CD8-positive, alpha-beta T cell (primary cell): ENCODE measurements at regions of chr10 and their contacts with region 1.

Region 1: DNA sequence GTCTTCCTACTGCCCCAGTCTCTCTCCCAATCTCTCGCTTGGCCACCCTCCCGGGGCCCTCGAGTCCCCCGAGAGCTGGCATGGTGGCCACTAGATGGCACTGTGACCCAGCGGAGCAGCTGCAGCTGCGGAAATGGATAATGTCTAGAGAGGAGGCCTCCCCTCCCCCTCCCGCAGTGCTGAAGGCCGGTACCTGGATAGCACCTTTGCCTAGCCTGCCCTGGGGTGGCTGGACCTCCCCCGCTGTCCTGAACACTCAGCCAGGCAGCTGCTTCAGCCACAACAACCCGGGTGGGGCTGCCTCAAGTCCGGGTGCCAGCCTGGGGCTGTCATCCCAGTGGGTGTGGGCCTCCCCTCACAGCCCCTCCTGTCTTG is 65.2 kb downstream of the GOLGA7B start:
- DNase-seq: peak; percentile 44 to 81 (median 72)
- ATAC-seq: peak; percentile 85
- H3K4me3 ChIP-seq: no peak overlapping the region
- H3K4me3 Mint-ChIP-seq: no peak overlapping the region
- H3K27ac ChIP-seq: no peak overlapping the region
- H3K27ac Mint-ChIP-seq: no peak overlapping the region
- H3K4me1 ChIP-seq: no peaks in the 10 kb centered on the region
- H3K4me1 Mint-ChIP-seq: peaks cover 5% of the 10 kb centered on the region
- H3K27me3 ChIP-seq: peaks cover 0 to 3% of the 10 kb centered on the region in 2 experiments
- H3K27me3 Mint-ChIP-seq: peaks cover 13% of the 10 kb centered on the region
- CTCF ChIP-seq: peak; percentile 91

Region 2: DNA sequence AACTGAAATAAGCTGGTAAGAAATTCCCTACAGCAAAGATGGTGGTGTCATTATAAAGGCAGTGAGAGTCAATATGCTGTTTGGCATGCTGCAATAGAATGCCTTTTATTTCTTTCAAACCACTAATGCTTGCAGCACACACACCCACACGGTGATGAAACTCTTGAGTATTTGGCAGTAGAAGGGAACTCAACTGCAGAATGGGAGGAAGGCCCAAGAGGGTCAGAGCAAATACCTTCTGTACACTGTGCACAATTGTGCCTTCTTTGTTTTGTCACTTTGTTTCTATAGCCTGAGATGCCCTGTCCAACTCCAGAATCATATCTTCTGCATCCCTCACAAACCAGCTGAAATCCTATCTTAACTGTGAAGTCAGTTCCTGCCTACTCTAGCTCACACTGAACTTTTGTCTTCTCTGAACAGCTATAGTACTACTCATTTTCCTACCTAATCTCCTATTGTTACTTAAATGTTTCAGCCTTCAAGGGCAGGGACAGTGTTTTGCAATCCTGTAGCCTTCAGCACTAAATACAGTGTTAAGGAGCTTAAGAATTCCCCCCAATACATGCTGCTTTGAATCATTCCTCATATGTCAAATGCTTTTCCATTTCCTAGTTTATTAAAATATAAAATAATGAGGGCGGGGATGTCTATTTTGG is 438.8 kb before region 1 on chr10:
- CTCF ChIA-PET with region 1: no interaction called
- POLR2A ChIA-PET with region 1: no interaction called
- intact Hi-C with region 1: no loop called
- DNase-seq: no peak
- ATAC-seq: no peak
- H3K4me3 ChIP-seq: no peak overlapping the region
- H3K4me3 Mint-ChIP-seq: no peak overlapping the region
- H3K27ac ChIP-seq: no peak overlapping the region
- H3K27ac Mint-ChIP-seq: peak overlapping the region; percentile 37
- H3K4me1 ChIP-seq: no peaks in the 10 kb centered on the region
- H3K4me1 Mint-ChIP-seq: no peaks in the 10 kb centered on the region
- H3K27me3 ChIP-seq: no peaks in the 10 kb centered on the region
- H3K27me3 Mint-ChIP-seq: no peaks in the 10 kb centered on the region
- CTCF ChIP-seq: no peak

Region 3: DNA sequence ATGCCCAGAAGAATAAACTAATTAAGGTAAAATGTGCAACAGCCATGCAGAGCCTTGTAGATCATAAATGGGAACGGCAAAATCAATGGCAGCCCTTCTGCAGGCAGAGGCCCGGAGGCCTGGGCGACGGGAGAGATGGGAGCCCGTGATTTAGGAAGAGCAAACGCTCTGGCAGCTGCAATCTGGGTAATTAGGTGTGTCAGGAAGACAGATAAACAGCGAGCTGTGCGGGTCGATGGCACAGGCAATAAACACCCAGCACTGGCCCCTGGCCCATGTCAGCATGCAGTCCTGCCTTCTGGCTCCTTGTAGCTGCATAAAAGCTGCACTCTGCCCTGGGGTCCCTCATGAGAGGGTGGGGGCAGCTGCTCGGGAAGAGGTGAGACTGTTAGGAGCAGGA is 12.8 kb after region 1 on chr10:
- CTCF ChIA-PET with region 1: interaction called, 12 read pairs
- POLR2A ChIA-PET with region 1: no interaction called
- intact Hi-C with region 1: no loop called
- DNase-seq: no peak
- ATAC-seq: no peak
- H3K4me3 ChIP-seq: no peak overlapping the region
- H3K4me3 Mint-ChIP-seq: no peak overlapping the region
- H3K27ac ChIP-seq: no peak overlapping the region
- H3K27ac Mint-ChIP-seq: no peak overlapping the region
- H3K4me1 ChIP-seq: no peaks in the 10 kb centered on the region
- H3K4me1 Mint-ChIP-seq: no peaks in the 10 kb centered on the region
- H3K27me3 ChIP-seq: peaks cover 0 to 2% of the 10 kb centered on the region in 2 experiments
- H3K27me3 Mint-ChIP-seq: peaks cover 30% of the 10 kb centered on the region
- CTCF ChIP-seq: no peak

Region 4: DNA sequence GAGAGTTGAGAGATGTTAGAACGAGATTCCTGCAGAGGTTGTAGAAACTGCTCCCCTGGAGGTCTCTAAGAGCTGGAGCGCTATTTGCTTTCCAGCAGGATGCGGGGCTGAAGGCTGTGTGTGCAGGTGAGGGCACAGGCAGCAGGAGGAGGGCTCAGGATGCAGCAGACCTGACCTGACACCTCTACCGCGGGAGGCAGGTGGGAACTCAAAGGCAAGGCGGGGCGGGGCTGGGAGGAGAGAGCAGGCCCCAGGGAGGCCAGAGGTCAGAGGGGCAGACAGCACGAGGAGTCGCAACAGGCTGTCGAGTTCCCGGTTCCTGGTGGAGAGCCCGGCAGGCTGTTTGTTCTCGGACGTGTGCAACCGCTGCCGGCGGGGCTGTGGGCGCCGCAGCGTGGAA is 123.5 kb after region 1 on chr10:
- CTCF ChIA-PET with region 1: interaction called, 34 read pairs
- POLR2A ChIA-PET with region 1: no interaction called
- intact Hi-C with region 1: loop called in 1 of 2 experiments (anchors 1 kb)
- DNase-seq: no peak
- ATAC-seq: no peak
- H3K4me3 ChIP-seq: no peak overlapping the region
- H3K4me3 Mint-ChIP-seq: no peak overlapping the region
- H3K27ac ChIP-seq: no peak overlapping the region
- H3K27ac Mint-ChIP-seq: no peak overlapping the region
- H3K4me1 ChIP-seq: no peaks in the 10 kb centered on the region
- H3K4me1 Mint-ChIP-seq: no peaks in the 10 kb centered on the region
- H3K27me3 ChIP-seq: peaks cover 7 to 16% of the 10 kb centered on the region in 2 experiments
- H3K27me3 Mint-ChIP-seq: peaks cover 75% of the 10 kb centered on the region
- CTCF ChIP-seq: no peak

Region 5: DNA sequence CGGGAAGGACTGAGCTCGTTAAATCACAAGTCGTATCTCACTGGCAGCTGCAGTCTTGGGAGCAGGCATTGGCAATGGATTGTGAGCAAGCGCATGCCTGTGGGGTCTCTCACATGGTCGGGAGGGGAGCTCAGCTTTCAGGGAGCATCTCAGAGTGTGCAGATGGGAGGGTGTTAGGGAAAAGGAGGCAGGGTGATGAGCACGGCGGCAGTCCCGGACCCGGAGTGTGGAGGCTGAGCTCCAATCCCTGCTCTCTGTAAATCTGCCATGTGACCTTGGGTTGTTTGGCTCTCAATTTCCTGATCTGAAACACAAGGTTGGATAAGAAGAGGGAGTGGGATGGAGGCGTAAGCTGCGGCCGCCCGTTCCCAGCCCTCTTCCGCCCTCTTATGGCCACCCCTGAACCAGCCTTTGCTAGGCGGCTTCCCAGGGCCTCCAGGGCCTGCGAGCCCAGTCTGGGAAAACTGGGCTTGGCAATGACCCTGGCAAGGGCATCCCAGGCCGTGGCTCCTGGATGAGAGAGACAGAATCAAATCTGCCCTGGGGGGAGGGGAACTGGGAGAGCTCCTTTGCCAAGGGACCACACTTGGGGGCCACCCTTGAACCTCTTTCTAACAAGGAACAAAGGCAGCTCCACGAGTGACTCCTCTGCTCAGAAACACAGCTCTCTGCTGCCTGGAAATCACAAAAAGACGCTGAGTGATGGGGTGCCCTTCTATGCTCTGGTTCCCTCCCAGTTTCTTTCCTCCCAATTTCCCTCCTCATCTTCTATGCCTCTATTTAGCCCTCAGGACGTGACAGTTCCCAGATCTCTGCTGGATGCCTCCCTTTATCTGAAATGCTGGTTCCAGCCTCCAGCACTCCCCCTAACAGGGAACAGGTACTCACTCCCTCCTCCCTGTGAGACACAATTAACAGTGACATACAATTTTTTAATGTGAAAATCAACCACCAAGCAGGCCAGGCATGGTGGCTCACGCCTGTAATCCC is 394.8 kb after region 1 on chr10:
- CTCF ChIA-PET with region 1: interaction called, 10 read pairs
- POLR2A ChIA-PET with region 1: no interaction called
- intact Hi-C with region 1: no loop called
- DNase-seq: peak in 2 of 9 experiments; percentile 26 to 36
- ATAC-seq: no peak
- H3K4me3 ChIP-seq: no peak overlapping the region
- H3K4me3 Mint-ChIP-seq: no peak overlapping the region
- H3K27ac ChIP-seq: no peak overlapping the region
- H3K27ac Mint-ChIP-seq: no peak overlapping the region
- H3K4me1 ChIP-seq: no peaks in the 10 kb centered on the region
- H3K4me1 Mint-ChIP-seq: no peaks in the 10 kb centered on the region
- H3K27me3 ChIP-seq: peaks cover 0 to 5% of the 10 kb centered on the region in 2 experiments
- H3K27me3 Mint-ChIP-seq: peaks cover 34% of the 10 kb centered on the region
- CTCF ChIP-seq: no peak

Region 6: DNA sequence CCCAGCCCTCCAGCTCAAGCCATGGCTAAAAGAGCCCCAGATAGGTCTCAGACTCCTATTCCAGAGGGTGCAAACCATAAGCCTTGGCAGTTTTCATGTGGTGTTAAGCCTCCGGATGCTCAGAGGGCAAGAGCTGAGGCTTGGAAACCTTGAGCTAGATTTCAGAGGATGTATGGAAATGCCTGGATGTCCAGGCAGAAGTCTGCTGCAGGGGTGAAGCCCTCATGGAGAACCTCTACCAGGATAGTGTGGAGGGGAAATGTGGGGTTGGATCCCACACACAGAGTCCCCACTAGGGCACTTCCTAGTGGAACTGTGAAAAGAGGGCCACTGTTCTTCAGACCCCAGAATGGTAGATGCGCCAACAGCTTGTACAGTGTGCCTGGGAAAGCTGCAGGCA is 1334.0 kb after region 1 on chr10:
- CTCF ChIA-PET with region 1: no interaction called
- POLR2A ChIA-PET with region 1: no interaction called
- intact Hi-C with region 1: loop called in 1 of 2 experiments (anchors 2 kb)
- DNase-seq: no peak
- ATAC-seq: no peak
- H3K4me3 ChIP-seq: no peak overlapping the region
- H3K4me3 Mint-ChIP-seq: no peak overlapping the region
- H3K27ac ChIP-seq: no peak overlapping the region
- H3K27ac Mint-ChIP-seq: no peak overlapping the region
- H3K4me1 ChIP-seq: no peaks in the 10 kb centered on the region
- H3K4me1 Mint-ChIP-seq: no peaks in the 10 kb centered on the region
- H3K27me3 ChIP-seq: no peaks in the 10 kb centered on the region
- H3K27me3 Mint-ChIP-seq: peaks cover 28% of the 10 kb centered on the region
- CTCF ChIP-seq: no peak